Brain microvascular endothelial cell (primary cell): ENCODE measurements at regions of chr12 and their contacts with region 1.

Region 1: DNA sequence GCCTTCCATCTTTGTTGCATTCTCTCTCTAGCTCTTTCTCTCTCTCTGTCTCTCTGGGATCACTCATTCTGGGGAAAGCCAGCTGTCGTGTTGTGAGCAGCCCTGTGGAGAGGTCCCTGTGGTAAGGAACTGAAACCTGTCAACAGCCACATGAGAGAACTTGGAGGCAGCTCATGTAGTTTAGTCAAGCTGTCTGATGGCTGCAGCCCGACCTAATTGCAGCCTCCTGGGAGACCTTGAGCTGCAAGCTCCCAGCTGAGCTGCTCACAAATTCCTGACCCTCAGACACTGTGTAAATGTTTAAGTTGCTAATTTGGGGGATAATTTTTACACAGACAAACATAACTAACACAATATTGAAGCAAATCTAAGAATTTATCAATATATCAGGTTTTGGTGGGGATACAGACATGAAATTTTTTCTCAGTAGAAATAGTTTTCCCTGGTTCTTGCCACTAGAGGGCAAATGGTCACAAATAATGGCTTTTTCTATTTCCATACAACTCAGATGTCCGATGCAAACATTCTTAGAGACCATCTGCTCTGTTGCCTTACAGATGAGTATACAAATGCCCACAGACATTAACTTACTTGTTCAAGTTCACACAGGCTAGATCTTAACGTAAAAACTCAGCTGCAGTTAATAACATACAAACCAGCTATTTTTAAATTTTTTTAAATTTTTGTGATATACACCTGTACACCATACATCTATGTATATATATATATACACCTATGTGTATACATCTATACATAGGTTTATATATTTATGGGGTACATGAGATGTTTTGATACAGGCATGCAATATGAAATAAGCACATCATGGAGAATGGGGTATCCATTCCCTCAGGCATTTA is 15.5 kb upstream of the KRR1 start:
- DNase-seq: peak; percentile 58
- H3K4me3 ChIP-seq: no peak overlapping the region
- H3K27ac ChIP-seq: no peak overlapping the region
- H3K27me3 ChIP-seq: no peaks in the 10 kb centered on the region
- CTCF ChIP-seq: peak; percentile 48

Region 2: DNA sequence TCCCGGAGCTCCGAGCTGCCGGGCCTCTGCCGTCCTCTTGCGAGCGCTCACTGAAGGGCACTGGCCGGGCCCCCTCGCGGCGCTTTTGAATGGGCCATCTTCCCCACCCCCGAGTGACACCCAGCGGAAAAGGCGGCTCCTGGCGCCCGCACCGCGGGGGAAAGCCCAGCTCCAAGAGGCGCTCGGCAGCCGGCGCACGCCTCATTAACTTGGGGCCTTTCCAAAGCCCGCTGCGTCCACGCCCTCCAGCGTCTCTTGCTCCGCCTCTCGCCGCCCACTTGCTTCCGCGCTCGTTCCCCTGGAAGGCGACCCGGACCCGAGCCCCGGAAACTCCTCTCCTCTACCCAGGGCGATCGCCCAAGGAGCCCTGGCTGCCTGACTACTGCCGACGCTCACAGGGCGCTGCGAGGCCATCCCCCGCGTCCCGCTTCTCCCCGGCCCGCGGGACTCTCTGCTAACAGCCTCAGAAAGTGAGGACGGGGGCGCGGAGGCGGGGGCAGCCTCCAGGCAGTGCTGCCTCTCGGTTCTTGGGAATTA is 504.7 kb after region 1 on chr12 and contains the start of gene PHLDA1:
- in situ Hi-C with region 1: loop called (anchors 25 kb)
- DNase-seq: peak; percentile 95
- H3K4me3 ChIP-seq: peak within 1 kb of the TSS; percentile 99
- H3K27ac ChIP-seq: peak within 1 kb of the TSS; percentile 98
- H3K27me3 ChIP-seq: no peaks in the 10 kb centered on the region
- CTCF ChIP-seq: peak; percentile 65